CD4-positive, alpha-beta T cell (primary cell): ENCODE measurements at regions of chr19 and their contacts with region 1.

Region 1: DNA sequence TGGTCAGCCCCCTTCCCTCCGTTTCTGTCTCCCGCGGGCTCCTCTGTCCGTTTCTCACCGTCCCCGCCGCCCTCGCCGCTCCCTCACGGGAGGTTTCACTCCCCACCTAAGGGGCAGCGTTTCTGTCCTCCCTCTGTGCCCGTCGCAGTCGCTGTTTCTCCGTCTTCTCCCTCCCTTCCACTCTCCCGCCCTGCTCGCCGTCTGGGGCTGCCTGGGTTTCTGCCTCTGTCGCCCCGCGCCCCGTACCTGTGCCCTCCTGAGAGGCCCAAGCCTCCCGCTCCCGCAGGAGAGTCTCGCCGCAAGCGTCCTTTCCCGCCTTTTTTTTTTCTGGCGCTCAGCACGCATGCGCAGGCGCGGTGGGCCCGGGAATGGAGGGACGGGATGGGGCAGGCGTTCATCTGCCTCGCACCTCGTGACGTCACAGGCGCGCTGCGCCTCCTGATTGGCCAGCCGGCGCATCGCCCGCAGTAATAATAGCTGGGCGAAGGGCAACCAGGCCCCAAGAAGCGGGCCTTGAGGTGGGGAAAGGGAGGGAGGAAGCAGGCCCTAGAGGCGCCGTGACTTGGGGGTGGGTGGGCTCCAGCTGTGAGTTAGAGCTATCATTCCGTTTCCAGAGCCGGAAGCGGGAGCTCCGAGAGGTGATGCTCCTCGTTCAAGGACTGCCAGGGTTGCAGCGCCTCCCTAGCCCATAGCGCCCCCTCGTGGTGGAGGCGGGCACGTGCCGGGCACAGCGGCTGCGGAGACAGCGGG is 15.4 kb downstream of the SSC5D start:
- DNase-seq: peak; percentile 82 to 96 (median 91)
- ATAC-seq: peak; percentile 92
- H3K4me3 ChIP-seq: peak overlapping the region; percentile 64
- H3K4me3 Mint-ChIP-seq: peak overlapping the region; percentile 89
- H3K27ac ChIP-seq: peak overlapping the region in 1 of 2 donors; percentile 44
- H3K27ac Mint-ChIP-seq: peak overlapping the region; percentile 76
- H3K4me1 ChIP-seq: peaks cover 13% of the 10 kb centered on the region
- H3K4me1 Mint-ChIP-seq: peaks cover 12% of the 10 kb centered on the region
- H3K27me3 ChIP-seq: no peaks in the 10 kb centered on the region
- H3K27me3 Mint-ChIP-seq: peaks cover 7% of the 10 kb centered on the region
- CTCF ChIP-seq: peak; percentile 98

Region 2: DNA sequence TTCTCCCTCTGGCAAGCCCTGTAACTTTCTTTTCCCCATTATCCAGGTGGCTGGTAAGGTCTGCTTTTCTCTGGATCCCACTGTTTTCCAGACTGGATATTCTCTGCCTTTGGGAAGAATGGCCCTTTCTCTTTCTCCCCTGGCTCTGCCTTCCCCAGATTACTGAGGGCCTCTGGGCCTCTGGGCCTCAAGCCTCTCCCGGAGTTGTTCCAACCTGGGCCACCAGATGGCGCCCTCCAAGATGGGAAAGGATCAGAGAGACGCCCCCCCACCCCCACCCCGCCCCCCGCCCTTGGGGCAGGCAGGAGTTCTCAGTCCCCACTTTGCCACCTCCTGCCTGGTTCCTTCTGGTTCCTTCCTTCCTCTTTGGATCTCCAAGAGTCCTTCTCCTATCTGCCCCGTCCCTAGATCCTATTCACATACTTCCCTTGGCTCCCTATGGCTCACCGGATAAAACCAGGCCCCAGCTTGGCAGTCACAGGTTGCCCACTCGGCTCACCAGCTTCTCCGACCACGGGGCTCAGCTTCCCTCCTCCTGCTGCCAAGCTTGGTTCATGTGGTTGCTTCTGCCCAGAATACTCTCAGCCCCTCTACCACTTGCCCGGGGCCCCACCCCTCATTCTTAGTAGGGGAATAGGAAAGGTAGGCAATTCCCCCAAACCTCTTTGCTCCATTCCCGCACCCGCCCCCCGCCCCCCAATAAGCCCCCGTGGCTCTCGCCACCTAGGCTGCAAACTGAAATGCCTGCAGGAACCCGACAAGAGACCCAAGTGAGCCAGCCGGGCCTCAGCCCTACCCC is 414.9 kb before region 1 on chr19:
- CTCF ChIA-PET with region 1: interaction called, 6 read pairs
- POLR2A ChIA-PET with region 1: no interaction called
- intact Hi-C with region 1: loop called in 1 of 2 experiments (anchors 5 kb)
- DNase-seq: peak; percentile 62 to 83 (median 73)
- ATAC-seq: peak; percentile 61
- H3K4me3 ChIP-seq: no peak overlapping the region
- H3K4me3 Mint-ChIP-seq: peak overlapping the region; percentile 49
- H3K27ac ChIP-seq: no peak overlapping the region
- H3K27ac Mint-ChIP-seq: no peak overlapping the region
- H3K4me1 ChIP-seq: peaks cover 23% of the 10 kb centered on the region
- H3K4me1 Mint-ChIP-seq: peaks cover 30% of the 10 kb centered on the region
- H3K27me3 ChIP-seq: peaks cover 32 to 42% of the 10 kb centered on the region in 2 experiments
- H3K27me3 Mint-ChIP-seq: peaks cover 54% of the 10 kb centered on the region
- CTCF ChIP-seq: peak; percentile 93

Region 3: DNA sequence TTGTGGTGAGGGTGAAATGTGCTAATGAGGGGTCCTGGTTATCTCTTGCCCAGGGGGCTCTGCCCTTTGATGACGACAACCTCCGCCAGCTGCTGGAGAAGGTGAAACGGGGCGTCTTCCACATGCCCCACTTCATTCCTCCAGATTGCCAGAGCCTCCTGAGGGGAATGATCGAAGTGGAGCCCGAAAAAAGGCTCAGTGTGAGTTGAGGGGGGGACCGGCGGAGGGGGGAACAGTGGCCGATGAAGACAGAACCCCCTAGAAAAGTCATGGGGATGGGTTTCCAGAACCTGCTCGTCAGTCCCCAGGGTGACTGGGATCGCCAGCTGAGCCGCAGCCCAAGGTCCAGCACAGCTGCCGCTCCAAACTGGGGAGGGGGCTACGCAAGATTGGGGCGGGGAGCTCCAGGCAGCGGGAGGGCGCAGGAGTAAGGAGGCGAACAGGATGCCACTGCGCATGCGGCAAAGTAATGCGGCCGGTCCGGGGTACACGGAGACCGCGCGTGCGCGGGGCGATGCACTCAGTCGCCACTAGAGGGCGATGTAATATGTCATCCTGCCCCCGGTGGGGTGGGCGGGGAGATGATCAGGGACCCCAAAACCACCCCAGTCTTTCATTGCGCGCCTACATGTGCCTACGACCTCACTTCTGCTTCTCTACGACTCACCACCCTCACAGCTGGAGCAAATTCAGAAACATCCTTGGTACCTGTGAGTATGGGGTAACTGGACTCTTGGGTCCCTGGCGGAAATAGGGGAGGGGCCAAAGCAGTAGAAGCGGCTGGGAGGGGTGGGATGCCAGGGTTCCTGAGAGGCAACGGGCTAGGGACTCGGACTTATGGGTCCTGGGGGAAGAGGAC is 202.0 kb before region 1 on chr19:
- CTCF ChIA-PET with region 1: interaction called, 10 read pairs
- POLR2A ChIA-PET with region 1: no interaction called
- intact Hi-C with region 1: loop called (anchors 5 to 10 kb)
- DNase-seq: peak; percentile 87 to 98 (median 94)
- ATAC-seq: peak; percentile 89
- H3K4me3 ChIP-seq: peak overlapping the region; percentile 37
- H3K4me3 Mint-ChIP-seq: peak overlapping the region; percentile 88
- H3K27ac ChIP-seq: no peak overlapping the region
- H3K27ac Mint-ChIP-seq: peak overlapping the region; percentile 61
- H3K4me1 ChIP-seq: peaks cover 21% of the 10 kb centered on the region
- H3K4me1 Mint-ChIP-seq: peaks cover 14% of the 10 kb centered on the region
- H3K27me3 ChIP-seq: no peaks in the 10 kb centered on the region
- H3K27me3 Mint-ChIP-seq: no peaks in the 10 kb centered on the region
- CTCF ChIP-seq: peak; percentile 95

Region 4: GRCh38 chr19:55467236-55468053 is 36.2 kb before region 1 on chr19:
- CTCF ChIA-PET with region 1: interaction called, 31 read pairs
- POLR2A ChIA-PET with region 1: no interaction called
- intact Hi-C with region 1: loop called (anchors 1 kb)
- DNase-seq: peak; percentile 30 to 82 (median 58)
- ATAC-seq: peak; percentile 93
- H3K4me3 ChIP-seq: no peak overlapping the region
- H3K4me3 Mint-ChIP-seq: no peak overlapping the region
- H3K27ac ChIP-seq: no peak overlapping the region
- H3K27ac Mint-ChIP-seq: no peak overlapping the region
- H3K4me1 ChIP-seq: peaks cover 11% of the 10 kb centered on the region
- H3K4me1 Mint-ChIP-seq: no peaks in the 10 kb centered on the region
- H3K27me3 ChIP-seq: no peaks in the 10 kb centered on the region
- H3K27me3 Mint-ChIP-seq: no peaks in the 10 kb centered on the region
- CTCF ChIP-seq: peak; percentile 97

Region 5: GRCh38 chr19:55599468-55600279 is 96.0 kb after region 1 on chr19 and contains the start of gene FIZ1:
- CTCF ChIA-PET with region 1: interaction called, 11 read pairs
- POLR2A ChIA-PET with region 1: no interaction called
- intact Hi-C with region 1: no loop called
- DNase-seq: peak; percentile 89 to 98 (median 94)
- ATAC-seq: peak; percentile 71
- H3K4me3 ChIP-seq: peak within 1 kb of the TSS; percentile 95
- H3K4me3 Mint-ChIP-seq: peak within 1 kb of the TSS; percentile 99
- H3K27ac ChIP-seq: peak within 1 kb of the TSS; percentile 95 to 97
- H3K27ac Mint-ChIP-seq: peak within 1 kb of the TSS; percentile 95
- H3K4me1 ChIP-seq: peaks cover 36% of the 10 kb centered on the region
- H3K4me1 Mint-ChIP-seq: peaks cover 26% of the 10 kb centered on the region
- H3K27me3 ChIP-seq: no peaks in the 10 kb centered on the region
- H3K27me3 Mint-ChIP-seq: no peaks in the 10 kb centered on the region
- CTCF ChIP-seq: no peak
- total RNA-seq, gene FIZ1: 5.5 to 7.3 TPM

Region 6: GRCh38 chr19:55624109-55625003 is 120.7 kb after region 1 on chr19 and contains the start of gene ZNF784:
- CTCF ChIA-PET with region 1: interaction called, 24 read pairs
- POLR2A ChIA-PET with region 1: interaction called, 3 read pairs
- intact Hi-C with region 1: no loop called
- DNase-seq: peak; percentile 88 to 98 (median 93)
- ATAC-seq: peak; percentile 69
- H3K4me3 ChIP-seq: peak within 1 kb of the TSS; percentile 68
- H3K4me3 Mint-ChIP-seq: peak within 1 kb of the TSS; percentile 98
- H3K27ac ChIP-seq: peak within 1 kb of the TSS; percentile 89 to 94
- H3K27ac Mint-ChIP-seq: peak within 1 kb of the TSS; percentile 100
- H3K4me1 ChIP-seq: peaks cover 56% of the 10 kb centered on the region
- H3K4me1 Mint-ChIP-seq: peaks cover 55% of the 10 kb centered on the region
- H3K27me3 ChIP-seq: no peaks in the 10 kb centered on the region
- H3K27me3 Mint-ChIP-seq: no peaks in the 10 kb centered on the region
- CTCF ChIP-seq: no peak
- total RNA-seq, gene ZNF784: 11.2 to 11.8 TPM